Caco-2 (cell line): ENCODE measurements at regions of chr1 and their contacts with region 1.

Region 1: GRCh38 chr1:52002038-52002917 is 11.8 kb upstream of the RAB3B start:
- DNase-seq: peak; percentile 69 to 90
- H3K4me3 ChIP-seq: no peak overlapping the region
- H3K4me3 Mint-ChIP-seq: no peak overlapping the region
- H3K27ac Mint-ChIP-seq: peak overlapping the region; percentile 6
- H3K4me1 ChIP-seq: peaks cover 18% of the 10 kb centered on the region
- H3K4me1 Mint-ChIP-seq: peaks cover 7% of the 10 kb centered on the region
- H3K27me3 ChIP-seq: no peaks in the 10 kb centered on the region
- H3K27me3 Mint-ChIP-seq: no peaks in the 10 kb centered on the region
- CTCF ChIP-seq: peak; percentile 63 to 89

Region 2: GRCh38 chr1:51814513-51814912 is 187.8 kb before region 1 on chr1:
- CTCF ChIA-PET with region 1: no interaction called
- POLR2A ChIA-PET with region 1: no interaction called
- intact Hi-C with region 1: loop called (anchors 5 kb)
- DNase-seq: no peak
- H3K4me3 ChIP-seq: no peak overlapping the region
- H3K4me3 Mint-ChIP-seq: no peak overlapping the region
- H3K27ac Mint-ChIP-seq: no peak overlapping the region
- H3K4me1 ChIP-seq: no peaks in the 10 kb centered on the region; the same call in 1 of the 2 replicates
- H3K4me1 Mint-ChIP-seq: peaks cover 6% of the 10 kb centered on the region
- H3K27me3 ChIP-seq: no peaks in the 10 kb centered on the region
- H3K27me3 Mint-ChIP-seq: no peaks in the 10 kb centered on the region
- CTCF ChIP-seq: no peak

Region 3: GRCh38 chr1:51897699-51898031 is 104.6 kb before region 1 on chr1:
- CTCF ChIA-PET with region 1: interaction called, 5 read pairs
- POLR2A ChIA-PET with region 1: no interaction called
- intact Hi-C with region 1: loop called (anchors 1 kb)
- DNase-seq: no peak
- H3K4me3 ChIP-seq: no peak overlapping the region
- H3K4me3 Mint-ChIP-seq: no peak overlapping the region
- H3K27ac Mint-ChIP-seq: no peak overlapping the region
- H3K4me1 ChIP-seq: no peaks in the 10 kb centered on the region; the same call in 1 of the 2 replicates
- H3K4me1 Mint-ChIP-seq: no peaks in the 10 kb centered on the region
- H3K27me3 ChIP-seq: no peaks in the 10 kb centered on the region
- H3K27me3 Mint-ChIP-seq: no peaks in the 10 kb centered on the region
- CTCF ChIP-seq: no peak

Region 4: GRCh38 chr1:51926171-51926812 is 76.0 kb before region 1 on chr1:
- CTCF ChIA-PET with region 1: no interaction called
- POLR2A ChIA-PET with region 1: no interaction called
- intact Hi-C with region 1: no loop called
- DNase-seq: peak in 1 of 2 experiments; percentile 2
- H3K4me3 ChIP-seq: no peak overlapping the region
- H3K4me3 Mint-ChIP-seq: no peak overlapping the region
- H3K27ac Mint-ChIP-seq: no peak overlapping the region
- H3K4me1 ChIP-seq: no peaks in the 10 kb centered on the region
- H3K4me1 Mint-ChIP-seq: no peaks in the 10 kb centered on the region
- H3K27me3 ChIP-seq: no peaks in the 10 kb centered on the region
- H3K27me3 Mint-ChIP-seq: no peaks in the 10 kb centered on the region
- CTCF ChIP-seq: no peak